Posterior cingulate gyrus (tissue), 11 donors: ENCODE measurements at regions of chr6 and their contacts with region 1.

Region 1: GRCh38 chr6:146700078-146700686 is 101.4 kb downstream of the ADGB start:
- DNase-seq: peak in 8 of 10 donors; percentile 16 to 84 (median 61)

Region 2: DNA sequence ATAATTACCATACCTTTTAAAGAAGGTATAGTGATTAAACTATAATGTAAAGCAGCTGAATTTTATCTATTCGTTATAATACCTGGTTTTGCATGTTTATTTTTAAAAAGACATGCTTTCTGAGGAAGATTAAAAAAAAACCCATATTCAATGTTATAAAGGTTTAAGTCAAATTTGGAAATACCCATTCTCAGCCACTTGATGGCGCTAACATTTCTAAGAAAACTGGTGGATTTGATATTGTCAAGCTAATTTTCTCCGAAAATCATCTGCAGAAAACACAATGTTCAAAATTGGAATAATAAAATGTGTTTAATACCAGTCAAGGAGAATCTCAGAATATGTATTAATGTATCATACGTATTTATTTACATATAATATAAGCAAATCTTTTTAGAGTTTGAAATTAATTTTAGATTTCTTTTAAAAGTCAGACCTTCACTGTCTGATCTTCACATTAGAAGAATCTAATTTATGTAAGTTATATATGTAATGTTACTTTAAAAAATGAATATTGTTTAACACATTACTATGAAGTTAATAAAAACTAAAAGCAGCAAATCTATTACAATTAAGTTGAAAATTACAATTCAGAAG is 771.0 kb before region 1 on chr6:
- intact Hi-C with region 1: loop called (anchors 1 kb)
- DNase-seq: no peak

Region 3: GRCh38 chr6:146543211-146543939 is 156.8 kb before region 1 on chr6 and contains the start of gene RAB32:
- intact Hi-C with region 1: loop called (anchors 2 kb)
- DNase-seq: peak; percentile 67 to 97 (median 81)

Region 4: DNA sequence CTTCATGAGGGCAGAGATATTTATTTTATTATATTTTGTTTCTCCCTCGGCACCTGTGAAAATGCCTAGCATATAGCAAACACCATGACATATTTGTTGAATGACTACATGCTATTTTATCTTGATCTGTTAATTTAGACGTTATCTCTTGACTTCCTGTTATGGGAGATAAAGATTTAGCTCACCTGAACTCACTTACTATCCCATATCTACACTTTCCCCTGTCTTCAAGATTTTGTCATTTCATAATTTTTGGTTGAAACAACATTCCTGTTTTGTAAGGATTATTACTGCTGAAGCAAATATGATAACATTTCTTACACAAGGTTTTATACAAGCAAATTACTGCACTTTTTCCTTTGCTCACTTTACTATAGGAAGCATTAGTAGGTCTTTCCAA is 10.7 kb after region 1 on chr6:
- intact Hi-C with region 1: no loop called
- DNase-seq: no peak

Region 5: DNA sequence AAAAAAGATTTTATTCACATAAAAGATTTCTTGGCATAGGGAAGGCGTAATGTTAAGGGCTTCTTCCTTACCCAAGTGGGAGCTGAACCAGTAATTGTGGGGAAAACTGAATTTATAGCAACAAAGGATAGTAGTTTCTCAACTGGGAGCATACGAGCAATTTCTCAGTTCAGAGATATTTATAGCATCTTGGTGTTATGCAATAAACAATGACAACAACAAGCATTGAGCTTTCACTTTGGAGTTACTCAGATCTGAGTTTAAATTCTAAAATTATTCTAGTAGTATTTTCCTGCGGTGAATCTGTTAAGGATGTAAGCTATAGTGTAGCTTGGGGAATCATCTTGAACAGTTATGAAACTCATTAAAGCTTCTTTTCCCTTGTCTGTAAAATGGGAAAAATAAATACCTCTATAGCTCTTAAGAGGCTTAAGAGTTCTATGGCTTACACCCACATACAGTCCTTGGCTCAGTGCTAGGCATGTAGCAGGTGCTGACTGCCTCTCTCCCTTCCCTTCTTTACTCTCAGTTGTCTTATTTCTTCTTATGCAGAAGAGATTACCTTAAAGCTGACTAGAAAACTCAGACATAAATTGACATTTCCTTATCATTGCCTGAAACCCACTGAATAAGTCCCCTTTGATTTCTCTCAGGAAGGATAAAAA is 867.1 kb after region 1 on chr6:
- intact Hi-C with region 1: no loop called
- DNase-seq: no peak